SK-N-SH (cell line): ENCODE measurements at regions of chr1 and their contacts with region 1.

Region 1: GRCh38 chr1:202329891-202330290 is 11.8 kb downstream of the UBE2T start:
- DNase-seq: no peak
- H3K4me3 ChIP-seq: no peak overlapping the region
- H3K27ac ChIP-seq: no peak overlapping the region
- H3K4me1 ChIP-seq: no peaks in the 10 kb centered on the region
- H3K27me3 ChIP-seq: no peaks in the 10 kb centered on the region
- CTCF ChIP-seq: no peak
- EP300 ChIP-seq: no peak
- RAD21 ChIP-seq: no peak

Region 2: DNA sequence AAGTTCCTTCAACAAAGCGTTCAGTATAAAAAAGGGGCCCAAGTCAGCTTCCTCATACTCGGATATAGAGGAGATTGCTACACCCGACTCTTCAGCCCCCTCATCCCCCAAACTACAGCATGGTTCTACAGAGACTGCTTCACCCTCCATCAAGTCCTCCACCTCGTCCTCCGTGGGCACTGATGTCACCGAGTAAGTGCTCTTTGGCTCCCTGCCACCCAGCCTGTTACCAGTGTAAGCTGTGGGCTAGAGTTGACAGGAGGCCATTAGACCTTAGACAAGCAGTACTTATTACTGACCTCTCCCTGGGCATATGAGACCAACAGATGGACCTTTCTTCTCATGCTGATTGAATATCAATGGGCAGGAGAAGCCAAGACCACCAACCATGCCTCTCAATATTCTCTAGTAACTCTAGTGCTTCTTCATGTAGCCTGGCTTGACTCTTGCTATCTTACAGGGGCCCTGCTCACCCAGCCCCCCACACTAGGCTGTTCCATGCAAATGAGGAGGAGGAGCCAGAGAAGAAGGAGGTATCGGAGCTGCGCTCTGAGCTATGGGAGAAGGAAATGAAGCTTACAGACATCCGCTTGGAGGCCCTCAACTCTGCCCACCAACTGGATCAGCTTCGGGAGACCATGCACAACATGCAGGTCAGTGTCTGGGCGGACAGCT is 521.8 kb before region 1 on chr1:
- CTCF ChIA-PET with region 1: no interaction called
- POLR2A ChIA-PET with region 1: no interaction called
- DNase-seq: no peak
- H3K4me3 ChIP-seq: no peak overlapping the region
- H3K27ac ChIP-seq: no peak overlapping the region
- H3K4me1 ChIP-seq: no peaks in the 10 kb centered on the region
- H3K27me3 ChIP-seq: no peaks in the 10 kb centered on the region
- CTCF ChIP-seq: no peak
- EP300 ChIP-seq: no peak
- RAD21 ChIP-seq: no peak

Region 3: DNA sequence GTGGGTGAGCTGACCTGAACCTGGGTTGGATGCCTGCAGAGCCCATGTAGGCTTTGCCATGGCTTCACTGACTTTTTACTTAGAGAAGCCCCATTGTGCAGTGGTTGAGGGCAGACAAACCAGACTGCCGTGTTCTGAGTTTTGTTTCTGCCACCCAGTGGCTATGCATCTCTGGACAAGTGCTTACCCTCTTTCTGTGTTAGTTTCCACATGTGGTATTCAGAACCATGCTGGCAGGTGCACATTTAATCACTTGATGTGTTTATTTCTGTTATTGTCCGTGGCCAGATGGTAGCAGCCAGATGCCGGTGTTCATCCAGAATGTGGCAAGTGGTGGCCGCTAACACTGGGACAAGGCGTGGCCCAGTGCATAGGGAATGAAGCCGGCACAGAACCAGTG is 159.2 kb before region 1 on chr1:
- CTCF ChIA-PET with region 1: no interaction called
- POLR2A ChIA-PET with region 1: no interaction called
- DNase-seq: no peak
- H3K4me3 ChIP-seq: no peak overlapping the region
- H3K27ac ChIP-seq: no peak overlapping the region
- H3K4me1 ChIP-seq: peaks cover 0 to 39% of the 10 kb centered on the region in 2 experiments; a peak in 1 of 4 replicates
- H3K27me3 ChIP-seq: no peaks in the 10 kb centered on the region
- CTCF ChIP-seq: no peak
- EP300 ChIP-seq: no peak
- RAD21 ChIP-seq: no peak

Region 4: DNA sequence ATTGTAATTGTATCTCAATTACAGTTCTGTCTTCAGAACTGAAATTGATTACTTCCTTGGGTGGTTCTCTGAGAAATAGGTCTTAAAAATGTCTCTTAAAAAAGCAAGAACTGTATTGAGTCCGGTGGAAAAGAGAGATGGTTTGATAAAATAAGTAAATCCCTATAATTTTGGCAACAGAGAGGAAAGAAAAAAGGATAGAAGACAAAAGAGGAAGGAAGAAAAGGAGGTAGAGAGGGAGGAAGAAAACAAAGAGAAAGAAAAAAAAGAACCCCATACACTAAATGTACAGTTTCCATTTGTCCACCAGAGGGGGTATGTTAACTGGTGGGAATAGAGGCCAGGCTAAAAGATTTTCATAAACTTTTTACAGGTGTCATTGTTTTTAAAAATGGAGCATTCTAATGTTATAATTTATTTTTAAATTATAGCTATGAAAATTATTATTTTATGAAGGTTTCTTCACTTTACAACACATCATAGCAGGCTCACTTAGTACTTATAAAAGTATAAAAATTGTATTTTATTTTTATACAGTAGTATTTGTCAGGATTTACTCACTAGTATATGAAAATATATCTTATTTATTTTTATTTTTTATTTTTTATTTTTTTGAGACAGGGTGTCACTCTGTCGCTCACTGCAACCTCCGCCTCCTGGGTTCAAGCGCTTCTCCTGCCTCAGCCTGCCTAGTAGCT is 13.9 kb after region 1 on chr1:
- CTCF ChIA-PET with region 1: interaction called, 16 read pairs
- POLR2A ChIA-PET with region 1: interaction called, 3 read pairs
- DNase-seq: peak; percentile 37
- H3K4me3 ChIP-seq: peak overlapping the region in 1 of 2 experiments; percentile 23; a peak in 1 of 4 replicates
- H3K27ac ChIP-seq: 0 out of 4 replicates have a peak overlapping the region, but pooled peaks of 1 of the 2 experiments have one; percentile 13
- H3K4me1 ChIP-seq: no peaks in the 10 kb centered on the region; a peak in 2 of 4 replicates
- H3K27me3 ChIP-seq: no peaks in the 10 kb centered on the region
- CTCF ChIP-seq: peak; percentile 82
- EP300 ChIP-seq: no peak
- RAD21 ChIP-seq: peak; percentile 72